Dendritic cell treated with granulocyte-macrophage colony-stimulating factor and Interleukin-4, amounts not matched to agents 40 ng/mL and 50 ng/mL, for 4 days (primary cell): ENCODE measurements at regions of chr2 and their contacts with region 1.

Region 1: DNA sequence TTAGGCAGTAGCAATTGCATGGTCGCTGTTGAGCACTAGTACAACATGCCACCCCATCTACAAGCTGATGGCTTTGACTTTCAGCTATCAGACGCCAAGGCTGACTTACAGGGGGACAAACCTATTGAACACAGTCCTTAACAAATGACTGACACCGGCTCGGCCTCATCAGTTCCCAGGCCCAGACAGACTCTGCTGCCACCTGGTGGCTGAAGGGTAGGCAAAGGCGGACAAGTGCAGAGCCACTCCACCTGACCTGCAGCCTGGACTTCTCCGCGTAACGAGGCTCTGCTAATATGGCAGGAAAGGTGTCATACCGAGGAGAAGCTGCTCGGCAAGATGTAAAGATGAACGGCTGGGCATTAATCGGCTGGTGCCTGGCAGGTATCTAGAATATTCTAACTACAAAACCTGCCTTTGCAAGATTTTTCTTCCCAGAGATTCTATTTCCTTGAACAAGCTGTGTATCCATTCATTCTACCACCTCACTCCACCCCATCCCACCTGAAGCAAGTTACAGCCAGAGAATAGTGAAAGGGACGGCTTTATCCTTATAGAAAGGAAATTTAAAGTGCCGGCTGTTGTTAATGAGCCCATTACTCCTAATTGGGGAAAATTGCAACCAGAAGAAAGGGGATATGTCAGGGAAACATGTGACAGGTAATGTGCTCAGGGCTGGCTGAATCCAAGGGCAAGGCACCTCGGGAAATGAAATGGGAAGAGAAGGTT is 67.4 kb downstream of the STEAP3 start:
- H3K4me3 Mint-ChIP-seq: no peak overlapping the region
- H3K27ac Mint-ChIP-seq: no peak overlapping the region
- H3K4me1 Mint-ChIP-seq: no peaks in the 10 kb centered on the region
- H3K27me3 Mint-ChIP-seq: peaks cover 1% of the 10 kb centered on the region

Region 2: DNA sequence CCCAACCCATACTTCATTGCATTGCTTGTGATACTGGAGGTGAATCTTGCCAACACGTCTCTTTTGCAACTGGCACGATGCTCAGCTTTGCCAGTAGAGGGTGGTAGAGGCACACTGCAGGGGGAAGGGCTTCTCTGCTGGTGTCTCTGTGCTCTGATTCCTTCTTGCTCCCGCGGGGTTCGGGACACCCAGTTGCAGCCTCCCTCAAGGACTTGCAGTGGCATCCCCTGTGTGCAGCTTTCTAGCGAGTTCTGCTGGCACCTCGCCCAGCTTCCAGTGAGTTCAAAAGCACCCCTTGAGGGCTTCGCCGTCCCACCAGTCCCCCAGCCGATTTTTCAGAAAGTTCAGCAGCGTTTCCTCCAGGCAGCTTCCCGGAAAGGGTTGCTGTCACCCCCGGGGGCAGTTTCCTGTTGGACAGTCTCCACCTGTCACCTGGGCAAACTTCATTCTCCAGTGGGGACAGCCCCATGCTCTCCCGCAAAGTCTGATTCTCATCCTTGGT is 408.3 kb before region 1 on chr2:
- intact Hi-C with region 1: loop called (anchors 2 kb)
- H3K4me3 Mint-ChIP-seq: peak overlapping the region; percentile 68
- H3K27ac Mint-ChIP-seq: no peak overlapping the region
- H3K4me1 Mint-ChIP-seq: peaks cover 25% of the 10 kb centered on the region
- H3K27me3 Mint-ChIP-seq: peaks cover 26% of the 10 kb centered on the region

Region 3: DNA sequence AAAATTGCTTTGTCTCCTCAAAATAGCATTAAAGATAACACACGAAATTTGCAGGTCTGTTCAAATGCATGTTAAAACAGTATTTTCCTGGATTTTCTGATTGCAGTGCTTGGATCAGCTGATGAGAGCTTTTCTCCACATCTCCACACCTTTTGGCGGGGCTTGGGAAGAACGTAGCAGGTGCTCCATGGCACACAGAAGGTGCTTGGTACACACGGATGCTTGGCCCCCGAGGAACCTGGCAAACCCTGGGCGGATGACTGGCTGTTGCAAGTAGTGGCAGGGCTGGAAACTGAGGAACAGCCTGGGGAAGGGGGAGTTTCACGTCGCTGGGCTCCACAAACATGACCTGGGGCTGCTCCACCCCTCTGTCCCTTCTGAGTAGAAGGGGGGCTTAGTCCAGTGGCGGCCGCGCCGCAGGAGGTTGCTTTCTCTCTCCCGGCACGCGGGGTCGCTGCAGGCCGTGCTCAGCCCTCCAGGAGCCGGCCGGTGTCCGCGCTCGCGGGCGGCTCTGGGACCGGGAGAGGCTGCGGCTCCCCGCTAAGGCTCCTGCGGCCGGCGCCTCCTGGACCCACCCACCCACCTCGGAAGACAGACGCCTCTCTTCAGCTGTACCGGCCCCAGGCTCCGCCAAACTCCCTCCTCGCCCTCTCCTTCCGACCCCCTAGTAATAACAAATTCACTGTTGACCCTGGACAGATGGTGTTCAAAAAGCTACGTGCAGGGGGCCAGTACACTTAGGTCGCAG is 279.7 kb before region 1 on chr2:
- intact Hi-C with region 1: loop called (anchors 5 kb)
- H3K4me3 Mint-ChIP-seq: no peak overlapping the region
- H3K27ac Mint-ChIP-seq: no peak overlapping the region
- H3K4me1 Mint-ChIP-seq: peaks cover 33% of the 10 kb centered on the region
- H3K27me3 Mint-ChIP-seq: peaks cover 47% of the 10 kb centered on the region

Region 4: DNA sequence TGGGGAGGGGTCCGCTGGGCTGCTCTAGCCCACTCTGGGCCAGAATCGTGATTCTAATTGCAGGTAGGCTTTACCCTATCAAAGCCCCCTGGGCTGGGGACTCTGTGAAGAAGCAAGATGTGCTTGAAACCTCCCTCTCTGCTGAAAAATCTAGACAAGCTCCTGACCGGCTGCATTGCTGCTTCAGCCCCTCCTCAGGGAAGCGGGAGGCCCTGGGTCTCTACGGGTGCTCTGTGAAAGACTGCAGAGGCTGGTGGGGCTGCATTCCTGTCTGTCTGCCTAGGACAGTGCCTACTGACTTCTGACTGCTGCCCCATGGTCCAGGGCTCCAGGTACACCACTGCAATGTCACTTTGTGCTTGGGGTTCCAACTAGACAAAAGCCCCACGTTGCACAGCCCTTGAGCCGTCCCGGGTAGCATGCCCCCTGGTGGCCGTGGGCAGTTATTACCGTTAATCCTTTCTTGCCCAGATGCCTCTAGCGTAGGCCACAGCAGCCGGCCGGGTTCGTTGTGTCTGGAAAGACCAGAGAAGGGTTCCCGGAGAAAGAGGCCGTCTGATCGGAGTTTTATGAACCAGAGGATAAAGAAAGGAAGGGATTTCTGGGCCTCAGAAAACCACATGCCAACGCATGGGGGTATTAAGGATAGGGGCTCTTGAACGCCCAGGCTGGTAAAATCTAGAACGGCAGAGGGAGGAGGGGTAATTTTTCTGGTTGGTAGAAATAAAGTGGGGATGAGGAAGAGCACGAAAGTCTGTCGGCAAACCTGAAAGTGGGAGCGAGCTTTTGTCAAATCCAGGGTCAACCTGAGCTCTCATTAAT is 116.6 kb before region 1 on chr2:
- intact Hi-C with region 1: loop called (anchors 2 kb)
- H3K4me3 Mint-ChIP-seq: no peak overlapping the region
- H3K27ac Mint-ChIP-seq: no peak overlapping the region
- H3K4me1 Mint-ChIP-seq: no peaks in the 10 kb centered on the region
- H3K27me3 Mint-ChIP-seq: peaks cover 7% of the 10 kb centered on the region

Region 5: GRCh38 chr2:119223521-119224390 is 67.3 kb before region 1 on chr2 and contains the start of gene STEAP3:
- intact Hi-C with region 1: loop called (anchors 5 kb)
- H3K4me3 Mint-ChIP-seq: peak within 1 kb of the TSS; percentile 70
- H3K27ac Mint-ChIP-seq: no peak within 1 kb of the TSS
- H3K4me1 Mint-ChIP-seq: peaks cover 14% of the 10 kb centered on the region
- H3K27me3 Mint-ChIP-seq: peaks cover 37% of the 10 kb centered on the region

Region 6: GRCh38 chr2:119234377-119235019 is 56.5 kb before region 1 on chr2:
- intact Hi-C with region 1: loop called (anchors 2 kb)
- H3K4me3 Mint-ChIP-seq: no peak overlapping the region
- H3K27ac Mint-ChIP-seq: no peak overlapping the region
- H3K4me1 Mint-ChIP-seq: peaks cover 10% of the 10 kb centered on the region
- H3K27me3 Mint-ChIP-seq: no peaks in the 10 kb centered on the region

Region 7: GRCh38 chr2:119449521-119449920 is 158.5 kb after region 1 on chr2:
- intact Hi-C with region 1: no loop called
- H3K4me3 Mint-ChIP-seq: no peak overlapping the region
- H3K27ac Mint-ChIP-seq: no peak overlapping the region
- H3K4me1 Mint-ChIP-seq: peaks cover 10% of the 10 kb centered on the region
- H3K27me3 Mint-ChIP-seq: peaks cover 34% of the 10 kb centered on the region